CD8-positive, alpha-beta T cell (primary cell): ENCODE measurements at regions of chr10 and their contacts with region 1.

Region 1: DNA sequence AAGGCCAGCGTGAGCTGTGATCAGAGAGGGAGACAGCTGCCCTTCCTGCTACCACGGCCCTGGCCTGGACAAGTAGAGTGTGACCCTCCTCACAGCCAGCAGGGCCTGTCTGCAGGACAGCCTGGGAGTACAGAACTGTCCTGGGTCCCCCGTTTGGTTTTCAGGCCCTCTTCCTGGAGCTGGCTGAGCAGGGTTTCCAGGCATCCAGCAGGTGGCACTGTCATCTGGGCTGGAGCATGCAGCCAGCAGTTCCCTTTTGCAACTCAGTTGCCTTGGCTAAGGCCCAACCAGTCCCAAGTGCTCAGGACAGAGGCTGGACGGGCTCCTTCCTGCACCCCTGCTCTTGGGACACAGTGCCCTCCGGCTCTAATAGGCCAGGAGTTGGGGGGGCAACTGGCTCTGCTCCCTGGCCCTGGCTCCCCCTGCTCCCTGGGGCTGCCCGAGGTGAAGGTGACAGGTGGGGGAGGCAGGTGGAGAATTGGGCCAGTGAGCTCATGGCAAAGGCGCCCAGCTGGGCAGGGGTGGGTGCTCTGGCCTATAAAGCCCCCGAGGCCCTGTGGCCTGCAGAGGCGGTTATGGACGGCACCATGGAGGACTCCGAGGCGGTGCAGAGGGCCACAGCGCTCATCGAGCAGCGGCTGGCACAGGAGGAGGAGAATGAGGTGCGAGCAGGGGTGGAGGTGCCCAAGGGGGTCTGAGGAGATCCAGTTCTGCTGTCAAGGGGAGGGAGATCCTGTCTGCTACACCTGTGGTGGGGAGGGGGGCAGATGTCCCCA is at the start of gene ANKRD2:
- DNase-seq: peak; percentile 19 to 66 (median 51)
- ATAC-seq: peak; percentile 64
- H3K4me3 ChIP-seq: no peak within 1 kb of the TSS
- H3K4me3 Mint-ChIP-seq: no peak within 1 kb of the TSS
- H3K27ac ChIP-seq: no peak within 1 kb of the TSS
- H3K27ac Mint-ChIP-seq: no peak within 1 kb of the TSS
- H3K4me1 ChIP-seq: no peaks in the 10 kb centered on the region
- H3K4me1 Mint-ChIP-seq: no peaks in the 10 kb centered on the region
- H3K27me3 ChIP-seq: no peaks in the 10 kb centered on the region
- H3K27me3 Mint-ChIP-seq: no peaks in the 10 kb centered on the region
- CTCF ChIP-seq: peak; percentile 62
- total RNA-seq, gene ANKRD2: not detected

Region 2: GRCh38 chr10:96910488-96911395 is 661.7 kb before region 1 on chr10:
- CTCF ChIA-PET with region 1: no interaction called
- POLR2A ChIA-PET with region 1: no interaction called
- intact Hi-C with region 1: no loop called
- DNase-seq: peak in 3 of 9 experiments; percentile 9 to 65 (median 56)
- ATAC-seq: peak; percentile 66
- H3K4me3 ChIP-seq: no peak overlapping the region
- H3K4me3 Mint-ChIP-seq: no peak overlapping the region
- H3K27ac ChIP-seq: no peak overlapping the region
- H3K27ac Mint-ChIP-seq: no peak overlapping the region
- H3K4me1 ChIP-seq: no peaks in the 10 kb centered on the region
- H3K4me1 Mint-ChIP-seq: peaks cover 33% of the 10 kb centered on the region
- H3K27me3 ChIP-seq: no peaks in the 10 kb centered on the region
- H3K27me3 Mint-ChIP-seq: no peaks in the 10 kb centered on the region
- CTCF ChIP-seq: peak; percentile 88

Region 3: GRCh38 chr10:97490592-97490991 is 81.8 kb before region 1 on chr10:
- CTCF ChIA-PET with region 1: no interaction called
- POLR2A ChIA-PET with region 1: no interaction called
- intact Hi-C with region 1: no loop called
- DNase-seq: no peak
- ATAC-seq: no peak
- H3K4me3 ChIP-seq: no peak overlapping the region
- H3K4me3 Mint-ChIP-seq: no peak overlapping the region
- H3K27ac ChIP-seq: no peak overlapping the region
- H3K27ac Mint-ChIP-seq: no peak overlapping the region
- H3K4me1 ChIP-seq: peaks cover 26% of the 10 kb centered on the region
- H3K4me1 Mint-ChIP-seq: peaks cover 58% of the 10 kb centered on the region
- H3K27me3 ChIP-seq: no peaks in the 10 kb centered on the region
- H3K27me3 Mint-ChIP-seq: no peaks in the 10 kb centered on the region
- CTCF ChIP-seq: no peak

Region 4: DNA sequence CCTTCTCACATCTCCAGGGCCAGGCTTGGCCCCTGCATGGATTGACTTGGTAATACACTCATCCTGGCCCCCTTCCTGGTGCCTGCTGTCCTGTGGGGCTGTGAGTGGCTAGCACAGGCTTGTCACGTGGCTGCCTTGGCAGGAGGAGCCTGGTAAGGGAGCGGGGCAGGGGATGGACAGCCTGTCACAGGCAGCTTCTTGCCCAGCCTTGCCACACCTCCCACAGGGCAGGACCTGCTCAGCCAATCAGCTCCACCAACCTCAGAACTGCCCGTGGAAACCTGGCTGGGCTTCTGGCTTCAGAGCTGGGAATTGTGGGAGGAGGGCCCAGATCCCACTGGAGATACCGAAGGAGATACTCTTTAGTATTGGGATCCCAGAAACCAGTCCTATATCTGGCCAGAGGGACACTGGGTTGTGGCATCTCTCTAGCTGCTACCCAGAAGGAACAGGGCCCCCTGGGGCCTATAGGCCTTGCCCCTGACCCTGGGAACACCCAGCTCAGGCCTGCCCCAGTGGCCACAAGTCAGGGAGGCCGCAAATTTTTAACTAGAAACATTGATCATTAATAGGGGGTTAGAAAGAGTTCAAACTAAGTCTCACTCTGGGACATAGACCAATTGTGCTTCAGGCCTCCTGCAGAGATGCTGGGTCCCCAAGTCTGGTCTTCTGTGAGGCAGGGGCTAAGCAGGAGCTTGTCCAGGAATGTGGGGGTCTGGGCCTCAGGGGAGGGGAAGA is 11.8 kb after region 1 on chr10 and contains the start of gene HOGA1:
- CTCF ChIA-PET with region 1: interaction called, 16 read pairs
- POLR2A ChIA-PET with region 1: no interaction called
- intact Hi-C with region 1: no loop called
- DNase-seq: peak in 1 of 9 experiments; percentile 32
- ATAC-seq: no peak
- H3K4me3 ChIP-seq: no peak within 1 kb of the TSS
- H3K4me3 Mint-ChIP-seq: no peak within 1 kb of the TSS
- H3K27ac ChIP-seq: no peak within 1 kb of the TSS
- H3K27ac Mint-ChIP-seq: no peak within 1 kb of the TSS
- H3K4me1 ChIP-seq: no peaks in the 10 kb centered on the region
- H3K4me1 Mint-ChIP-seq: no peaks in the 10 kb centered on the region
- H3K27me3 ChIP-seq: peaks cover 0 to 2% of the 10 kb centered on the region in 2 experiments
- H3K27me3 Mint-ChIP-seq: no peaks in the 10 kb centered on the region
- CTCF ChIP-seq: no peak
- total RNA-seq, gene HOGA1: not detected